Heart right ventricle (tissue), 16 donors: ENCODE measurements at regions of chr1 and their contacts with region 1.

Region 1: GRCh38 chr1:7534061-7534825 is 236.9 kb upstream of the VAMP3 start:
- DNase-seq: no peak
- ATAC-seq: no peak
- H3K4me3 ChIP-seq: no peak overlapping the region
- H3K27ac ChIP-seq: no peak overlapping the region
- H3K4me1 ChIP-seq: peaks cover 0 to 8% (median 0%) of the 10 kb centered on the region in 9 donors
- H3K27me3 ChIP-seq: peaks cover 0 to 22% (median 0%) of the 10 kb centered on the region in 7 donors
- CTCF ChIP-seq: no peak

Region 2: DNA sequence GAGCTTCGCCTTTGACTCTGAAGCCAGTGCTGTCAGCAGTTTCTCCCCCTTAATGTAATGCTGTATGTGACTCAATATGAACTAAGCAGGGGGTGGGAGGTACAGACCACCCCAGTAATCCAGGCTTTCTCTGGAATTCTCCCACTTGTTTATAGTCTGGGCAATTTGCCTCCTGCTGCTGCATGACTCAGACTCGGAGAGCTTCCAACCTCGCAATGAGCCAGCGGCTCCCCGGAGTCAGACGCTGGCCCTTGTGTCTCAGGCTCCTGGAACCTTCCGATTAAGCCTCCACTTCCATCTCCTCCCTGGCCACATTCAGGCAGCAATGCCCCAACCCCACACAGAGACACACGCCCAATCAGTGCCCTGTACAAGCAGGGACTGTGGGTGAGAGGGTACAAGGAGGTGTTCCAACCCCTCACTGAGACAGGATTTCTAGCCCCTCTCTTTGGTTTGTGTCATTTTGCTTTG is 234.9 kb before region 1 on chr1:
- intact Hi-C with region 1: no loop called
- DNase-seq: peak; percentile 56 to 59
- ATAC-seq: peak; percentile 63 to 94 (median 86)
- H3K4me3 ChIP-seq: no peak overlapping the region
- H3K27ac ChIP-seq: peak overlapping the region in 3 of 10 donors; percentile 2 to 77 (median 4)
- H3K4me1 ChIP-seq: peaks cover 0 to 18% (median 15%) of the 10 kb centered on the region in 9 donors
- H3K27me3 ChIP-seq: no peaks in the 10 kb centered on the region
- CTCF ChIP-seq: no peak

Region 3: DNA sequence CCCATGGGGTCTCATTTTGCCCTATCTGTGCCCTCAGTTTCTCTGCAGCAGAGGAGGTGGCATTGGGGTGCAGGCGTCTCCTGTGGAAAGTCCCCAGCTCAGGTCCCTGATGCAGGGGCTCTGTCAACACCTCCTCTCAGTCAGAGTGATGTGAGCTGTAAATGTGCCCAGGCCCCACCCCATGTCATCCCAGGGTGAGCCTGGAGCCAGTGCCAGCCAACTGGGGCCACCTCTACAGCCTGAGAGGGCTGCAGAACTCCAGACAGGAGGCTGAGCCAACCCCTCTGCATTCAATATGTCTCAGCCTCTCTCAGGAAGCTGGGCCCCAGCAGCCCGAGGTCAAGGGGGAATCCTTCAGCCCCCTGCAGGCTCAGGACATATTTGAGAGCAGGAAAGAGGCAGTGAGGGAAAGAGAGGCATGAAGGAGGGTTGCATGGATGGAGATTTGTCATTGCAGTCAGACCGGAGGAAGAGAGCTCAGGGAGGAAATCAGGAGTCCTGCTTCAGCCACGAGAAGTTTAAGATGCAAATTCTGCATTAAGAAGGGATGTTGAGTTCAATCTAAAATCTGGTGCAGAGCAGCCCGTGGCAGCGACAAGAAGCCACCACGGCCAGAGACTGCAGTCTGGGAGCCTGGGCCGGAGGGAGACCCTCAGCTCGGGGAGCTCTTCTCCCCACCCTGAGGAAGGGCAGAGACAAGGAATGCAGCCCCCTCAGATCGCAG is 51.3 kb before region 1 on chr1:
- intact Hi-C with region 1: loop called in 1 of 10 experiments (anchors 5 kb)
- DNase-seq: no peak
- ATAC-seq: peak in 6 of 8 donors; percentile 16 to 68 (median 50)
- H3K4me3 ChIP-seq: no peak overlapping the region
- H3K27ac ChIP-seq: no peak overlapping the region
- H3K4me1 ChIP-seq: peaks cover 0 to 21% (median 9%) of the 10 kb centered on the region in 9 donors
- H3K27me3 ChIP-seq: no peaks in the 10 kb centered on the region
- CTCF ChIP-seq: no peak